CD4-positive, alpha-beta T cell (primary cell): ENCODE measurements at regions of chr17 and their contacts with region 1.

Region 1: DNA sequence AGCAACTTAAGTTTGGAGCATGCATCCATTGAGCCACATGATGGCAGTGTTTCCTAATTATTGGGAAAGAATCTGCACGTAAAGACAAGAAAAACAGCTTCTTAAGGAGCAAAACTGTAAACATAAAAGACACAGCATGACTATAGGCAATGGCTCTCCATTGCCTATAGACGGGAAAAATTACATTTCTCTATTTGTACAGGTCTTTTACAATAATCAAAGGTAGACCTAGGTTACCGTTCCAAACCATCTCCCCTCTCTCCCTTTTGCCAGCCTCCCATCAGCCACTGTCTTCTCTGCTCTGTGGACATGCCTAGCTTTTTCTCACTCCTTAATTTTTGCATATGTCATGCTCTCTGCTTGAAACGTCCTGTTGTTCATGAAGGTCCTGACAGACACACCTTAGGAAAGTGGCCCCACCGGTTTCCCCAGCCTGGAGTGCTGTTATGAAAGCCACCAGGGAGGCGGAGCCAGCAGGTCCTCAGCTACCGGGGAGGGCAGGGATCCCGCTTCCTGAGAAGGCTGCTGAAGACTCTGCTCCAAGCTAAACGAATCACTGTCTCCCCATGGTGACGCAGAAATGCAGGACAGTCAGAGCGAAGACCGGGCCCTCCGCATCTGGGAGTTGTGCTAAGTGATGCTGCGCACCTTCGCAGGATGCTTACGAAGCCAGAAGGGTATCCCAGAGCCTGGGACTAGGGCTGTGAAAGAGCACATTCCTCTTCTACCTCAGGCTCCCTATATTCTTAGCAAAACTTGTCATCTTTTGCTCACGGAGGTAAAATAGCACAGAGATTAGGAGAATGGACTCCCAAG is 2.2 kb upstream of the SLC16A11 start:
- DNase-seq: peak in 9 of 14 experiments; percentile 31 to 89 (median 49)
- ATAC-seq: peak; percentile 53
- H3K4me3 ChIP-seq: peak overlapping the region; percentile 55
- H3K4me3 Mint-ChIP-seq: peak overlapping the region; percentile 90
- H3K27ac ChIP-seq: peak overlapping the region; percentile 64 to 68
- H3K27ac Mint-ChIP-seq: peak overlapping the region; percentile 94
- H3K4me1 ChIP-seq: peaks cover 49% of the 10 kb centered on the region
- H3K4me1 Mint-ChIP-seq: peaks cover 44% of the 10 kb centered on the region
- H3K27me3 ChIP-seq: peaks cover 0 to 5% of the 10 kb centered on the region in 2 experiments
- H3K27me3 Mint-ChIP-seq: no peaks in the 10 kb centered on the region
- CTCF ChIP-seq: peak; percentile 80

Region 2: DNA sequence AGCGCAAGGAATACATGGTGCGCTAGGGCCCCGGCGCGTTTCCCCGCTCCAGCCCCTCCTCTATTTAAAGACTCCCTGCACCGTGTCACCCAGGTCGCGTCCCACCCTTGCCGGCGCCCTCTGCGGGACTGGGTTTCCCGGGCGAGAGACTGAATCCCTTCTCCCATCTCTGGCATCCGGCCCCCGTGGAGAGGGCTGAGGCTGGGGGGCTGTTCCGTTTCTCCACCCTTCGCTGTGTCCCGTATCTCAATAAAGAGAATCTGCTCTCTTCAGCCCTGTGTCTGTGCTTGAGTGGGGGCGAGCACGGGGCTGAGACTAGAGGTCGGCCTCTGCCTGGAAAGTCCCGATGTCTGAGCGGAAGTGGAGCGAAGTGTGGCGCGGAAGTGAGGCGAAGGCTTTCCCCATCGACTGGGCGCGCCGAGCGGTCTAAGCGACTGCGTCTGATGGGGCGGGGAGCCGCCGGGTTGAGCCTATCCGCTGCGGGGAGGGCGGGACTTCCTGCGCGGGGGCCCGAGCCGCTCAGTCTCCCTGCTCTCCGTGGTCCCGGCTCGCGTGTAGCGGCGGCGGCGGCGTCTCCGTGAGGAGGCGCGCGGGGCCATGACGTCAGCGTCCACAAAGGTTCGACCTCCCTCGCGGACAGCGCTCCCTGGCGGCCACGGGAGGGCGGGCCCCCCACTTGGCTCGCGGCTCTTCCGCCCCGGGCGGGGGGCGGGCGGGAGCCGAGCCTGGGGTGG is 31.7 kb before region 1 on chr17:
- CTCF ChIA-PET with region 1: interaction called, 9 read pairs
- POLR2A ChIA-PET with region 1: interaction called, 11 read pairs
- intact Hi-C with region 1: no loop called
- DNase-seq: peak; percentile 95 to 100 (median 97)
- ATAC-seq: peak; percentile 76
- H3K4me3 ChIP-seq: peak overlapping the region; percentile 99
- H3K4me3 Mint-ChIP-seq: peak overlapping the region; percentile 99
- H3K27ac ChIP-seq: peak overlapping the region; percentile 98 to 99
- H3K27ac Mint-ChIP-seq: peak overlapping the region; percentile 98
- H3K4me1 ChIP-seq: peaks cover 78% of the 10 kb centered on the region
- H3K4me1 Mint-ChIP-seq: peaks cover 68% of the 10 kb centered on the region
- H3K27me3 ChIP-seq: no peaks in the 10 kb centered on the region
- H3K27me3 Mint-ChIP-seq: no peaks in the 10 kb centered on the region
- CTCF ChIP-seq: peak; percentile 70

Region 3: DNA sequence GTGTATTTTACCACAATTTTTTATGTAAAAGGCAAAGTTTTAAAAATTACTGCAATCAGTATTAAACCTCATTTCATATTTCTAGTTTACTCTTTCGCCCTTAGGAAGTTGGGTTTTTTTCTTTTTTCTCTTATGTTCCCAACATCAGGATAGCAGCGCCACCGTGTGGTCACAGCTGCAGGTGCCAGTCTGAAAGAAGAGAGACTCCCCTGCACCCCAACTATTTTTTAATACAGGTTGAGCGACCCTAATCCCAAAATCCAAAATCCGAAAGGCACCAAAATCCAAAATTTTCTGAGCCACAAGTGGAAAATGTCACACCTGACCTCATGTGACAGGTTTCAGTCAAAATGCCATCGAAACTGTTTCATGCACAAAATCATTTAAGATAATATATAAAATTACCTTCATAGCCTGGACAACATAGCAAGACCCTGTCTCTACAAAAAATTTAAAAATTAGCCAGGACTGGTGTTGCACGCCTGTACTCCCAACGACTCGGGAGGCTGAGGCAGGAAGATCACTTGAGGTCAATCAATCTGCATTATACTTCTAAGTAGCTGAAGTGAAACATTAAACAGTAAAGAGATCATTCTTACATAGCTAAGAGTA is 90.3 kb after region 1 on chr17:
- CTCF ChIA-PET with region 1: interaction called, 77 read pairs
- POLR2A ChIA-PET with region 1: interaction called, 51 read pairs
- intact Hi-C with region 1: loop called (anchors 1 kb)
- DNase-seq: peak; percentile 67 to 92 (median 78)
- ATAC-seq: no peak
- H3K4me3 ChIP-seq: no peak overlapping the region
- H3K4me3 Mint-ChIP-seq: no peak overlapping the region
- H3K27ac ChIP-seq: no peak overlapping the region
- H3K27ac Mint-ChIP-seq: peak overlapping the region; percentile 18
- H3K4me1 ChIP-seq: peaks cover 30% of the 10 kb centered on the region
- H3K4me1 Mint-ChIP-seq: peaks cover 24% of the 10 kb centered on the region
- H3K27me3 ChIP-seq: peaks cover 0 to 7% of the 10 kb centered on the region in 2 experiments
- H3K27me3 Mint-ChIP-seq: peaks cover 8% of the 10 kb centered on the region
- CTCF ChIP-seq: peak; percentile 94

Region 4: DNA sequence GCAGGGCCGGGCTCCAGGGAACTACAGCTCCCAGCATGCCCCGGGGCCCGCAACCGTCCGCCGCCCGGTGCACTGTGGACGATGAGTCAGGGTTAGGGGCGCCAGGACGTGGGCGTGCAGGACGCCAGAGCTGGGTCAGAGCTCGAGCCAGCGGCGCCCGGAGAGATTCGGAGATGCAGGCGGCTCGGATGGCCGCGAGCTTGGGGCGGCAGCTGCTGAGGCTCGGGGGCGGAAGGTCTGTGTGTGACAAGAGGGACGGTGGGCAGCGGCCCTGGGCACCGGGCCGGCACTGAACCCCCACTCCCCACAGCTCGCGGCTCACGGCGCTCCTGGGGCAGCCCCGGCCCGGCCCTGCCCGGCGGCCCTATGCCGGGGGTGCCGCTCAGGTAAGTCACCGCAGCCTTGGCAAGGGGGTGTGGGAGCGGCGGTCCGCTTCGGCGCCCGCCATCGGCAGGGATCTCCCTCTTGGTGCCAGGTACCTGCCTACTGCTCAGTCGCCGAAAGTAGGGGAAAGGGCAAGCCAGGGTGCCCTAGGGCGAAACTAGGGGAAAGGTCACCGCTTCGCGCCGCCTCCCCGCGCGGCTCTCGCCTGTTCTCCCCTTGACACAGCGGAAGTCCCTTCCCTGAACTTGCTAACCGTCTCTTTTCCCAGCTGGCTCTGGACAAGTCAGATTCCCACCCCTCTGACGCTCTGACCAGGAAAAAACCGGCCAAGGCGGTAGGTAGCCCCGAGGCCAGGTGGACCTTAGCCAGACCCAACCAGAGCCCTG is 173.9 kb after region 1 on chr17 and contains the starts of genes ACADVL and DLG4:
- CTCF ChIA-PET with region 1: interaction called, 3 read pairs
- POLR2A ChIA-PET with region 1: interaction called, 10 read pairs
- intact Hi-C with region 1: no loop called
- DNase-seq: peak; percentile 53 to 86 (median 74)
- ATAC-seq: peak; percentile 50
- H3K4me3 ChIP-seq: peak within 1 kb of the TSS; percentile 70
- H3K4me3 Mint-ChIP-seq: peak within 1 kb of the TSS; percentile 95
- H3K27ac ChIP-seq: peak within 1 kb of the TSS; percentile 75 to 79
- H3K27ac Mint-ChIP-seq: peak within 1 kb of the TSS; percentile 76
- H3K4me1 ChIP-seq: peaks cover 61% of the 10 kb centered on the region
- H3K4me1 Mint-ChIP-seq: peaks cover 54% of the 10 kb centered on the region
- H3K27me3 ChIP-seq: no peaks in the 10 kb centered on the region
- H3K27me3 Mint-ChIP-seq: no peaks in the 10 kb centered on the region
- CTCF ChIP-seq: no peak
- total RNA-seq, gene ACADVL: 237 to 257 TPM
- total RNA-seq, gene DLG4: 10.2 to 11.0 TPM

Region 5: GRCh38 chr17:7296189-7296902 is 250.2 kb after region 1 on chr17:
- CTCF ChIA-PET with region 1: interaction called, 8 read pairs
- POLR2A ChIA-PET with region 1: interaction called, 8 read pairs
- intact Hi-C with region 1: loop called in 1 of 2 experiments (anchors 5 kb)
- DNase-seq: peak; percentile 29 to 87 (median 58)
- ATAC-seq: peak; percentile 9
- H3K4me3 ChIP-seq: peak overlapping the region; percentile 10
- H3K4me3 Mint-ChIP-seq: peak overlapping the region; percentile 67
- H3K27ac ChIP-seq: no peak overlapping the region
- H3K27ac Mint-ChIP-seq: no peak overlapping the region
- H3K4me1 ChIP-seq: peaks cover 32% of the 10 kb centered on the region
- H3K4me1 Mint-ChIP-seq: peaks cover 19% of the 10 kb centered on the region
- H3K27me3 ChIP-seq: peaks cover 14 to 17% of the 10 kb centered on the region in 2 experiments
- H3K27me3 Mint-ChIP-seq: peaks cover 31% of the 10 kb centered on the region
- CTCF ChIP-seq: peak; percentile 98

Region 6: GRCh38 chr17:7589204-7589868 is 543.2 kb after region 1 on chr17:
- CTCF ChIA-PET with region 1: interaction called, 5 read pairs
- POLR2A ChIA-PET with region 1: interaction called, 3 read pairs
- intact Hi-C with region 1: loop called (anchors 2 to 10 kb)
- DNase-seq: peak; percentile 47 to 87 (median 62)
- ATAC-seq: peak; percentile 90
- H3K4me3 ChIP-seq: no peak overlapping the region
- H3K4me3 Mint-ChIP-seq: no peak overlapping the region
- H3K27ac ChIP-seq: no peak overlapping the region
- H3K27ac Mint-ChIP-seq: no peak overlapping the region
- H3K4me1 ChIP-seq: peaks cover 31% of the 10 kb centered on the region
- H3K4me1 Mint-ChIP-seq: peaks cover 7% of the 10 kb centered on the region
- H3K27me3 ChIP-seq: no peaks in the 10 kb centered on the region
- H3K27me3 Mint-ChIP-seq: no peaks in the 10 kb centered on the region
- CTCF ChIP-seq: peak; percentile 76